ENCODE measurements at regions of chr2 and their contacts with region 1.

Region 1: DNA sequence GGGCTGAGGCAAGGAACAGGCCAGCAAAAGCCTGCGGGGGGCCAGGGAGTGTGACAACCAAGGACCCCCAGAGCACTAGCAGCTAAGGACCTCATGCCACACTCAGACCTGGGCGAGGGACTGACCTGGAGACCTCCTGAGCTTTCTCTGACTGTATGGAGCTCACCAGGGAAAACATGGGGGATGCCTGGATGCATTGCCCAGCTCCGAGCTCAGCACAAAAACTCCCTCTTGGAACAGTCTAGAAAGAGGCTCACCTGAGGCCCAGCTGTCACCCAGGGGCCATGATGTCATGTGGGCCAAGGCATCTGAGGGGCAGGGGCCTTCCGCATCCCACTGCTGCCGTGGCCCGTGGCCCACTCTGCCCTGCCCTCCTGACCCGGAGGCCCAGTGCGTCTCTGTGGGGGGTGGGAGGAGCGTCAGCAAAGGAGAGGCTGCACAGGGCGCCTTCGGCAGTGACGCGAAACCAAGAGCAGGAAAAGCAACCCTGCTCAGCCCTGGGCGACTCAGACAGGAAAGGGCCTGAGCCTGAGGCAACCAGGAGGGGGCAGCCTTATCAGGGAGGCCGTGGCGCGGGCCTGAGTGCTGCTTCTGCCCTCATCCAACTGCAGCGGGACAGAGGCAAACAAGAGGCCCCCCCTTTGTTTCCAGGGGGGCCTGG is 57.3 kb upstream of the ALPP start:
- DNase-seq: peak; percentile 80
- ATAC-seq: peak; percentile 92
- H3K4me3 Mint-ChIP-seq: peak overlapping the region; percentile 83
- H3K27ac Mint-ChIP-seq: peak overlapping the region; percentile 97
- H3K4me1 Mint-ChIP-seq: peaks cover 52% of the 10 kb centered on the region
- H3K27me3 Mint-ChIP-seq: no peaks in the 10 kb centered on the region

Region 2: GRCh38 chr2:232292395-232293154 is 28.7 kb before region 1 on chr2:
- POLR2A ChIA-PET with region 1: interaction called, 20 read pairs
- DNase-seq: peak; percentile 72
- ATAC-seq: peak; percentile 82
- H3K4me3 Mint-ChIP-seq: no peak overlapping the region
- H3K27ac Mint-ChIP-seq: peak overlapping the region; percentile 57
- H3K4me1 Mint-ChIP-seq: peaks cover 11% of the 10 kb centered on the region
- H3K27me3 Mint-ChIP-seq: no peaks in the 10 kb centered on the region

Region 3: DNA sequence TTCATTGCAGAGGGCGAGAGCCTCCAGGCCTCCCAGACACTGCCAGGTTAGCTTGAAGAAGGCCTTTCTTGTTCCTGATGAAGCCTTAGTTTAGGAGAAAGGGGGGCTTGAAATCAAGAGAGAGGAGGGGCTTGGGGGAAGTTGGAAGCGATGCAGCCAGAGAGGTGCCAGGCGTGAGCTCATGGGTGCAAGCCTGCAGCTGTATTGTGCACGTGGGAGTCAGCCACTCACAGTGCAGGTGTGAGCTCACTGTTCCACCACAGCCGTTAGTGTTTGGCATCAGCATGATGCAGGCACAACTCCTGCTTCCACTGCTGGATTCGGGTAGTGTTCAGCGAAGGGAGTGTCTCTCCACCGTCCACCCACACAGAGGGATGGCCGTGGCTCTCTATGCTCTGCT is 11.2 kb before region 1 on chr2:
- POLR2A ChIA-PET with region 1: interaction called, 53 read pairs
- DNase-seq: no peak
- ATAC-seq: peak; percentile 57
- H3K4me3 Mint-ChIP-seq: peak overlapping the region; percentile 54
- H3K27ac Mint-ChIP-seq: peak overlapping the region; percentile 89
- H3K4me1 Mint-ChIP-seq: peaks cover 68% of the 10 kb centered on the region
- H3K27me3 Mint-ChIP-seq: no peaks in the 10 kb centered on the region